Activated naive CD4-positive, alpha-beta T cell treated with anti-CD3 and anti-CD28 coated beads for 36 hours (primary cell): ENCODE measurements at regions of chr9 and their contacts with region 1.

Region 1: DNA sequence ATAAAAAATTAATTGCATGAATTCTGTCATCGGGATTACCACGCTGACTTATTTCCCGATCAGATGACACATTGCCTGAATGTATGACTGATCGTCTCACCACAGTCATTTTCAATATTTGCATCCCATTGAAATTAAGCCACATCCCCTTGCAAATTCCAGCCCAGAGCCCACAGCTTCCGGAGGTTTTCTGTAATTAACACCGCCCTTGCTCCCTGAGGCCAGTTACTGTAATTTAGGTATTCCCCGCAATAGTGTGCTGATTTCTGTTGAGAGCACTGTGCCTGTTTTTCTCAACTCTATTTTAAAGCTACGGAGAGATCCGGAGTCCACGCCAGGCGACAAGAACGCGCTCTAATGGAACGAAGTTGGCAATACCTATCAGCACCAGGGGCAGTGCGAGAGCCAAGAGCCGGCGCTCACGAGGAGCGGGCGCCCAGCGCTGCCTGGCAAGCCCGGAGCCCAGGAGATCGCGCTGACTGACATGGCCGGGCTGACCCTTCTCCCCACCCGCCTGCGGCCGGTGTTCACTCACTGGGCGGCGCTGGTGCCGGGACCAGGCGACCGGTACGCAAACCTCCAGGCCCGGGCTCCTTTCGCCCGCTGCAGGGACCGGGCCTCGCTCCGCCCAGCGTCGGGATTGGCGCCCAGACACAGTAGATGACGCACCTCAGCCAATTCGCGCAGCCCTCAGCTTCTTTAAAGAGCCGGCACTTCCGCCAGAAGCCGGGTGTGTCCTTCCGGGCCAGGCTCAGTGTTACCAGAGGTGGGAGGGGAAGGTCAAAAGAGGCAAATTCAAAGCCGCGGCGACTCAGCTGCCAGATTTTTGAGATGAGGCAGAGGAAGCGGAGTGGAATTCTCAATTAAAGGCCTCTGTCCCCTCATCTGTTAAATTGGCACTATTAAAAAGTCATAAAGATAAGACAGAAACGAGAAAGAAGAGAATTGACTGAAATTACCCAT is at the start of gene PLGRKT:
- DNase-seq: peak; percentile 95
- H3K4me3 Mint-ChIP-seq: peak within 1 kb of the TSS; percentile 92
- H3K27ac Mint-ChIP-seq: peak within 1 kb of the TSS; percentile 98
- H3K4me1 Mint-ChIP-seq: peaks cover 51% of the 10 kb centered on the region
- H3K27me3 Mint-ChIP-seq: no peaks in the 10 kb centered on the region
- total RNA-seq, gene PLGRKT: 48.9 to 51.4 TPM

Region 2: GRCh38 chr9:4750023-4750673 is 687.4 kb before region 1 on chr9:
- CTCF ChIA-PET with region 1: no interaction called
- intact Hi-C with region 1: loop called (anchors 2 kb)
- DNase-seq: no peak
- H3K4me3 Mint-ChIP-seq: no peak overlapping the region
- H3K27ac Mint-ChIP-seq: no peak overlapping the region
- H3K4me1 Mint-ChIP-seq: peaks cover 34% of the 10 kb centered on the region
- H3K27me3 Mint-ChIP-seq: no peaks in the 10 kb centered on the region

Region 3: GRCh38 chr9:4939118-4939561 is 498.4 kb before region 1 on chr9:
- CTCF ChIA-PET with region 1: no interaction called
- intact Hi-C with region 1: loop called (anchors 2 kb)
- DNase-seq: no peak
- H3K4me3 Mint-ChIP-seq: no peak overlapping the region
- H3K27ac Mint-ChIP-seq: peak overlapping the region; percentile 88
- H3K4me1 Mint-ChIP-seq: peaks cover 79% of the 10 kb centered on the region
- H3K27me3 Mint-ChIP-seq: no peaks in the 10 kb centered on the region

Region 4: DNA sequence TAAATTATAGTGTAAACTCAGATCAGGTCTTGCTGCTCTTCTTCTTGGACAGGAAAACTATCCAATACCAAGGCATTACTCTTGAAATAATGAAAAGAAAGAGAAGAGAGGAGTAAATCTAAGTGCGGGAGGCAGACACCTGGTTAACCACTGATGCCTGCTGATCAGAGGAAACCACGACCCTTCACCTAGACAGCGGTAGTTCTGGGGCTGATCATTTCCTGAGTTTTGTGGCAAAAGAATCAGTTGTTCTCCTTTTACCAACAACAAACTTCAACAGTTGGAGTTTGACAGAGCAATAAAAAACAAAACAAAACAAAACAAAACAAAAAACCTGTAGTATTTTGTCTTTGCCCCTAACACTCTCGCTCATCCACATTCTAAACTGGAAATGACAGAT is 100.8 kb before region 1 on chr9:
- CTCF ChIA-PET with region 1: no interaction called
- intact Hi-C with region 1: loop called (anchors 2 kb)
- DNase-seq: peak; percentile 42
- H3K4me3 Mint-ChIP-seq: peak overlapping the region; percentile 57
- H3K27ac Mint-ChIP-seq: no peak overlapping the region
- H3K4me1 Mint-ChIP-seq: peaks cover 39% of the 10 kb centered on the region
- H3K27me3 Mint-ChIP-seq: no peaks in the 10 kb centered on the region

Region 5: DNA sequence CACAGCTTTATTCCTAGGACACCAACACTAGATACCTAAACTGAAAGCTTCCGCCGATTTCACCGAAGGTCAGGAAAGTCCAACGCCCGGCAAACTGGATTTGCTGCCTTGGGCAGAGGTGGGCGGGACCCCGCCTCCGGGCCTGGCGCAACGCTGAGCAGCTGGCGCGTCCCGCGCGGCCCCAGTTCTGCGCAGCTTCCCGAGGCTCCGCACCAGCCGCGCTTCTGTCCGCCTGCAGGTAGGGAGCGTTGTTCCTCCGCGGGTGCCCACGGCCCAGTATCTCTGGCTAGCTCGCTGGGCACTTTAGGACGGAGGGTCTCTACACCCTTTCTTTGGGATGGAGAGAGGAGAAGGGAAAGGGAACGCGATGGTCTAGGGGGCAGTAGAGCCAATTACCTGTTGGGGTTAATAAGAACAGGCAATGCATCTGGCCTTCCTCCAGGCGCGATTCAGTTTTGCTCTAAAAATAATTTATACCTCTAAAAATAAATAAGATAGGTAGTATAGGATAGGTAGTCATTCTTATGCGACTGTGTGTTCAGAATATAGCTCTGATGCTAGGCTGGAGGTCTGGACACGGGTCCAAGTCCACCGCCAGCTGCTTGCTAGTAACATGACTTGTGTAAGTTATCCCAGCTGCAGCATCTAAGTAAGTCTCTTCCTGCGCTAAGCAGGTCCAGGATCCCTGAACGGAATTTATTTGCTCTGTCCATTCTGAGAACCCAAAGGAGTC is 13.0 kb after region 1 on chr9 and contains the start of gene CD274:
- CTCF ChIA-PET with region 1: interaction called, 17 read pairs
- intact Hi-C with region 1: loop called (anchors 1 kb)
- DNase-seq: peak; percentile 83
- H3K4me3 Mint-ChIP-seq: peak within 1 kb of the TSS; percentile 89
- H3K27ac Mint-ChIP-seq: peak within 1 kb of the TSS; percentile 92
- H3K4me1 Mint-ChIP-seq: peaks cover 65% of the 10 kb centered on the region
- H3K27me3 Mint-ChIP-seq: no peaks in the 10 kb centered on the region
- total RNA-seq, gene CD274: 14.2 to 15.0 TPM

Region 6: DNA sequence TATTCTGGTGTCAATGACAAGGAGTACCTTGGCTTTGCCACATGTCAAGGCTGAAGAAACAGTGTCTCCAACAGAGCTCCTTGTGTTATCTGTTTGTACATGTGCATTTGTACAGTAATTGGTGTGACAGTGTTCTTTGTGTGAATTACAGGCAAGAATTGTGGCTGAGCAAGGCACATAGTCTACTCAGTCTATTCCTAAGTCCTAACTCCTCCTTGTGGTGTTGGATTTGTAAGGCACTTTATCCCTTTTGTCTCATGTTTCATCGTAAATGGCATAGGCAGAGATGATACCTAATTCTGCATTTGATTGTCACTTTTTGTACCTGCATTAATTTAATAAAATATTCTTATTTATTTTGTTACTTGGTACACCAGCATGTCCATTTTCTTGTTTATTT is 32.6 kb after region 1 on chr9:
- CTCF ChIA-PET with region 1: no interaction called
- intact Hi-C with region 1: no loop called
- DNase-seq: no peak
- H3K4me3 Mint-ChIP-seq: no peak overlapping the region
- H3K27ac Mint-ChIP-seq: no peak overlapping the region
- H3K4me1 Mint-ChIP-seq: peaks cover 18% of the 10 kb centered on the region
- H3K27me3 Mint-ChIP-seq: no peaks in the 10 kb centered on the region

Region 7: DNA sequence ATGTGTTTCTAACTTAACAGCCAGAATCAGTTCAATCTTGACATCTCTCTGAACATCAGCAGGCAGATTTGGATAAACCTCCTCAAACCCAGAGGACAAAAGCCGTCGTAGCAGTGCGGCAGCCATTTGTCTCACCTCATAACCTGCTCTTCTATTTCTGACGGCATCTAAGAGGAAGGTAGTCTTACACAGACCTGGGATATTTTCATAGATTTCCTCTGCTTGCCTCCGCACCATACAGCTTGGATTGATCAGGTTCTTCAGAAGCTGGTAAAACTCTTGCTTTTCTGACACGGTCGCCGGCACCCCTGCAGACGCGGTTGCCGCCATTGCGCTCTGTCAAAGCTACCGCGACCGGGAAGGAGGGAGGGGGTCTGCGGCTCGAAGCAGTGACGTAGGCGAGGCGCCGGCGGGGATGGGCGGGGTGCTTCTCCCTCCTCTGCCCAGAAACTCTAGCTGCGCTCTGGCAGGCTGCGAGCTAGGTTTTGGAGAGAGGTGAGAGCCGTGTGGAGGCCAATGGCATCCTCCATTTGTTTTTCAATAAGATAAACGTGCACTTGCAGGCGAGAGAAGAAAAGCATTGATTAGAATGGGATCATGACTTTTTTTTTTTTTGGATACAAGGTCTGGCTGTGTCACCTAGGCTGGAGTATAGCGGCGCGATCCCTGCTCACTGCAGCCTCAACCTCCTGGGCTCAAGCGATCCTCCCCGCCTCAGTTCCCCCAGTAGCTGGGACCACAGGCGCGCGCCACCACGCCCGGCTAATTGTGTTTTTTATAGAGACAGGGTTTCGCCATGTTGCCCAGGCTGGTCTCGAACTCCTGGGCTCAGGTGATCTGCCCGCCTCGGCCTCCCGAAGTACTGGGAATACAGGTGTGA is 578.0 kb after region 1 on chr9 and contains the start of gene RANBP6:
- CTCF ChIA-PET with region 1: no interaction called
- intact Hi-C with region 1: loop called (anchors 1 kb)
- DNase-seq: peak; percentile 95
- H3K4me3 Mint-ChIP-seq: peak within 1 kb of the TSS; percentile 98
- H3K27ac Mint-ChIP-seq: peak within 1 kb of the TSS; percentile 99
- H3K4me1 Mint-ChIP-seq: peaks cover 42% of the 10 kb centered on the region
- H3K27me3 Mint-ChIP-seq: no peaks in the 10 kb centered on the region
- total RNA-seq, gene RANBP6: 19.0 to 19.5 TPM